Colonic mucosa (tissue), 4 donors: ENCODE measurements at regions of chr5 and their contacts with region 1.

Region 1: DNA sequence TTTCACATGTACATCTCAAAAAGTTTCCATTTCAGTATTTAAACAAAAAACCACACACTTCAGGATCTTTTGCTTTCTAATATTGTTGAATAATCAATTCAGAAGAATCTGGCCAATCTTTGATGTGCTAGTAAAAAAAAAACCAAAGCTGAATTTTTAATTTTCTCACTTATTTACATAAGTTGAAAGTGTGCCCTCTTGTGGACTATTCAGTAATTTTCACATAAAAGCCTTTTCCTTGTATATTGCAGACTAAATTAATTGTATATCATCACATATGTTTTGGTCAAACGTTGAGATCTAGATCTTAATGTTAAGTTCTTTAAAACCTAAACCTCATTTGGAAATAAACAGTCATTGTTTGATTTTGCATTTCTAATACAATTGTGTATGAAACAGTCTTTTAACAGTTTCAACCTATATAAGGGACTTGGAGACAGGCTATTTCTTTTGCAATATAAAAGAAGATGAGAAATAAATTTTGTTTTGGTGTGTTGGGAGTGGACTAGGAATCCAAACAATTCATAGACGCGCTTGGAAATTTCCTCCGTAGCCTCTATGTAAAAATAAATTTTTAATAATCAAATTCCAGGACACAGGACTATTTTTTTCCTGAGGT is 68.1 kb downstream of the NIPBL start:
- DNase-seq: no peak
- H3K4me3 ChIP-seq: no peak overlapping the region
- H3K27ac ChIP-seq: no peak overlapping the region
- H3K4me1 ChIP-seq: no peaks in the 10 kb centered on the region
- H3K27me3 ChIP-seq: no peaks in the 10 kb centered on the region
- CTCF ChIP-seq: peak; percentile 50

Region 2: DNA sequence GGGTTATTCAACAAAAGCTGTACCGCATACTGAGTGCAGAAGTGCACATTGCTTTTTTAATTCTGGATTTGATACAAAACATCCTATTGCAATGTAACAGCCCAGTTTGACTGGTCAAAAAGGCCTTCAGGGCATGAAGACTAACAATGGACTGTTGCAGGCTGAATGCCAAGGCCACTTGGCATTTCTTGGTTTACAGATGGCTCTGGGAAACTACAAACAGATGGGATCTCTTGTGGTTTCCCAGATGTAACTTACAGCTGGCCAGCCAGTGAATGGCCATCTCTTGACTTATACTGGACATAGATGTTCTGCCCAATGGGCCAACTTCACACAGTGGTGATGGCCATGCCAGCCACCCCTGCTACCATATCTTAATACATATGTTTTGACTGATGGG is 914.8 kb before region 1 on chr5:
- intact Hi-C with region 1: no loop called
- DNase-seq: no peak
- H3K4me3 ChIP-seq: no peak overlapping the region
- H3K27ac ChIP-seq: no peak overlapping the region
- H3K4me1 ChIP-seq: no peaks in the 10 kb centered on the region
- H3K27me3 ChIP-seq: no peaks in the 10 kb centered on the region
- CTCF ChIP-seq: no peak

Region 3: GRCh38 chr5:36882250-36882649 is 62.5 kb before region 1 on chr5:
- intact Hi-C with region 1: loop called (anchors 5 kb)
- DNase-seq: no peak
- H3K4me3 ChIP-seq: no peak overlapping the region
- H3K27ac ChIP-seq: no peak overlapping the region
- H3K4me1 ChIP-seq: peaks cover 6% of the 10 kb centered on the region
- H3K27me3 ChIP-seq: no peaks in the 10 kb centered on the region
- CTCF ChIP-seq: no peak